GM12878 (cell line): ENCODE measurements at regions of chr16 and their contacts with region 1.

Region 1: GRCh38 chr16:64089697-64090096 is 1032.2 kb downstream of the CDH11 start:
- DNase-seq: no peak
- ATAC-seq: peak; percentile 66
- H3K4me3 ChIP-seq: no peak overlapping the region
- H3K27ac ChIP-seq: no peak overlapping the region
- H3K4me1 ChIP-seq: no peaks in the 10 kb centered on the region
- H3K27me3 ChIP-seq: no peaks in the 10 kb centered on the region
- CTCF ChIP-seq: peak in 2 of 3 experiments; percentile 24 to 38; a peak in 3 of 6 replicates
- EP300 ChIP-seq: no peak
- POLR2A ChIP-seq: no peak
- RAD21 ChIP-seq: peak; percentile 22; the same call in 1 of the 2 replicates

Region 2: GRCh38 chr16:64035337-64035736 is 54.4 kb before region 1 on chr16:
- CTCF ChIA-PET with region 1: no interaction called
- POLR2A ChIA-PET with region 1: no interaction called
- RAD21 ChIA-PET with region 1: no interaction called
- SMC1A ChIA-PET with region 1: no interaction called
- in situ Hi-C with region 1: loop called (anchors 10 kb)
- intact Hi-C with region 1: no loop called
- DNase-seq: no peak
- ATAC-seq: no peak
- H3K4me3 ChIP-seq: no peak overlapping the region
- H3K27ac ChIP-seq: no peak overlapping the region
- H3K4me1 ChIP-seq: no peaks in the 10 kb centered on the region
- H3K27me3 ChIP-seq: no peaks in the 10 kb centered on the region
- CTCF ChIP-seq: no peak
- EP300 ChIP-seq: no peak
- POLR2A ChIP-seq: no peak
- RAD21 ChIP-seq: no peak

Region 3: DNA sequence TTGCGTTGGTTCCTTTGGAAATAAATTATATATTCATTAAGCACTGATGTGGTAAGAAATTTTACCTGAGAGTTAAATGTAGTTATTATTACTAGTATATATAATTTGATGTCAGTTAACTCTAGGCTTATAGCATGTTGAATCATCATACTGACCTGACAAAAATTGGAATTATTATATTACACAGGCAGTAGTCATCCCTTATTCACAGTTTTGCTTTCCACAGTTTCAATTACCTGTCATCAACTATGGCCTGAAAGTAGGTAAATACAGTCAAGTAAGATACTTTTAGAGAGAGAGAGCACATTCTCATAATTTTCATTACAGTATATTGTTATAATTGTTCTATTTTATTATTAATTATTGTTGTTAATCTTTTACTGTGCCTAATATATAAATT is 42.5 kb before region 1 on chr16:
- CTCF ChIA-PET with region 1: no interaction called
- POLR2A ChIA-PET with region 1: no interaction called
- RAD21 ChIA-PET with region 1: no interaction called
- SMC1A ChIA-PET with region 1: no interaction called
- in situ Hi-C with region 1: no loop called
- intact Hi-C with region 1: no loop called
- DNase-seq: no peak
- ATAC-seq: no peak
- H3K4me3 ChIP-seq: no peak overlapping the region
- H3K27ac ChIP-seq: no peak overlapping the region
- H3K4me1 ChIP-seq: no peaks in the 10 kb centered on the region
- H3K27me3 ChIP-seq: no peaks in the 10 kb centered on the region
- CTCF ChIP-seq: no peak
- EP300 ChIP-seq: no peak
- POLR2A ChIP-seq: no peak
- RAD21 ChIP-seq: no peak